Aorta (tissue), 5 donors: ENCODE measurements at regions of chr15 and their contacts with region 1.

Region 1: GRCh38 chr15:37995461-37996347 is 61.3 kb downstream of the TMCO5A start:
- DNase-seq: no peak
- ATAC-seq: peak; percentile 71
- H3K4me3 ChIP-seq: no peak overlapping the region
- H3K27ac ChIP-seq: no peak overlapping the region
- H3K4me1 ChIP-seq: no peaks in the 10 kb centered on the region
- H3K27me3 ChIP-seq: no peaks in the 10 kb centered on the region

Region 2: DNA sequence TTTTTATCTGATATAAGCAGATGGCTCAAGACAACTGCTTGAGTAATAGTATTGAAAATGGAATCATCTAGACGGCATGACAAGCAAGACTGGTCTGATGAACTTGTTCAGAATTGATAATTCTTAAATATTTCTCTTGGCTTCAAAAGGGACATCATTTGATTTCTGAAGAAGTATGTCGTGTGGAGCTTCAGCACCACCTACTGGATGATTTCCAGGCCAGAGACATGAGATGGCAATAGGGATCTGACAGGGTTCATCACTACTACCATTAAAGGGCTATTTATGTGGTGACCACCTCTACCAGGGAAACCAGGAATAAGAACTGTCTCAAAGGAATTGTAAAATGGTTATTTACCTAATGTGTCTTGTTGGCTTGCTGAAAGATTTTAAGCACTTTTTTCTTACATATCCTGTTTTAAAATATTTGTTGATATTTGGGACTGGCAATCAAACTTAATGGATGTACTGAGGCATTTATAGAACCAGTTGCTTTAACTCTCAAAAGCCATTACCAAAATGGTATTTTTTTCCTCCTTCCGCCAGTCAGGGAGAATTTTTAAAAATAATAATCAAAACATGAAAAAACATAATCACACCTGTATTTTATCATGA is 358.7 kb after region 1 on chr15:
- intact Hi-C with region 1: loop called (anchors 5 kb)
- DNase-seq: peak in 1 of 2 donors; percentile 59
- ATAC-seq: no peak
- H3K4me3 ChIP-seq: no peak overlapping the region
- H3K27ac ChIP-seq: no peak overlapping the region
- H3K4me1 ChIP-seq: no peaks in the 10 kb centered on the region
- H3K27me3 ChIP-seq: no peaks in the 10 kb centered on the region

Region 3: DNA sequence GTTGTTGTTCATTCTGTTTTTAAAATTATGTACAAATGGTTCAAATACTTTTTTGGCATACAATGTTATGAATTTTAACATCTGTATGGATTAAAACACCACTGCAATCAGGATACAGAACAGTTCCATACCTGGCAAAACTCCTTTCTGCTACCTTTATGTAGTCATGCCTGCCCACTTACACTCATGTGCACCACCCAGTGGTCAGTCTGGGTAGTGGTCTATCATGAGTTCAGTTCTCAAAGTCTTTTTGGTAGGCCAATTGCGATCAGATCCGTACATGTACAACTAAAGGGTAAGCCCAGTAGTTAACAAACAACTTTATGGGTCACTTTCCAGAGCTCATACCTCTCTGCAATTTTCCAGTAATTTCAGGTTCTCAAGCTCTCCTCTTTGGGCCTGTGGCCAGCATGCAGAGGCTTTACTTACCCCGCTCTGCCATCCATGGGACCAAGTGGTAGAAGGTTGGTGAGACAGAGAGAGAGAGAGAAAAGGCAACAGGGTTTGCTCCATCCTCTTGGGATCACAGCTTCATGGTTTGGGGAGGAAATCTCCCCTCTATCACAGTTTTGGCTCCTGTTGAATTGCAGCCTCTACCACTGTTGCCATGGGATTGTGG is 394.3 kb after region 1 on chr15:
- intact Hi-C with region 1: loop called (anchors 2 to 5 kb)
- DNase-seq: peak; percentile 60 to 82
- ATAC-seq: peak; percentile 83
- H3K4me3 ChIP-seq: no peak overlapping the region
- H3K27ac ChIP-seq: no peak overlapping the region
- H3K4me1 ChIP-seq: no peaks in the 10 kb centered on the region
- H3K27me3 ChIP-seq: no peaks in the 10 kb centered on the region

Region 4: DNA sequence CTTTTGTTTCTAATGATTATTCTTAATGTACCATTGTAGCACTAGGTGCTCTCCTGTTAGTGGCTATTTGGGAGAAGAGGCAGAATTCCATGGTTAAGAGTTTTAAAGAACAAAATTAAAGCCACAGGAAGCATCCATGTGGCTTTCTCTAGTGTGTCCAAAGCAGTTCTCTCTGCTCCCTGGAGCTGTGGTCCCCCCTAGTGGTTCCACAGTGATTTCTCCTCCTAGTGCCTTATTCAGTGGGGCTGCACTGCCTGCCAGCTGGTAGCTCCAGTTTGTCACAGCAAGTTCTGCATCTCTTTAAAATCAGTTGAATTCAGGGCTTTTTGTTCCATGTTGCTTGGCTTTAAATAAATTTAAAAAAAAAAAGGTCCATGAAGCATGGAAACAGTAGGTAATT is 418.7 kb after region 1 on chr15:
- intact Hi-C with region 1: loop called in 1 of 2 experiments (anchors 10 kb)
- DNase-seq: peak in 1 of 2 donors; percentile 74
- ATAC-seq: peak; percentile 89
- H3K4me3 ChIP-seq: no peak overlapping the region
- H3K27ac ChIP-seq: no peak overlapping the region
- H3K4me1 ChIP-seq: no peaks in the 10 kb centered on the region
- H3K27me3 ChIP-seq: no peaks in the 10 kb centered on the region